MCF 10A (cell line): ENCODE measurements at regions of chr15 and their contacts with region 1.

Region 1: DNA sequence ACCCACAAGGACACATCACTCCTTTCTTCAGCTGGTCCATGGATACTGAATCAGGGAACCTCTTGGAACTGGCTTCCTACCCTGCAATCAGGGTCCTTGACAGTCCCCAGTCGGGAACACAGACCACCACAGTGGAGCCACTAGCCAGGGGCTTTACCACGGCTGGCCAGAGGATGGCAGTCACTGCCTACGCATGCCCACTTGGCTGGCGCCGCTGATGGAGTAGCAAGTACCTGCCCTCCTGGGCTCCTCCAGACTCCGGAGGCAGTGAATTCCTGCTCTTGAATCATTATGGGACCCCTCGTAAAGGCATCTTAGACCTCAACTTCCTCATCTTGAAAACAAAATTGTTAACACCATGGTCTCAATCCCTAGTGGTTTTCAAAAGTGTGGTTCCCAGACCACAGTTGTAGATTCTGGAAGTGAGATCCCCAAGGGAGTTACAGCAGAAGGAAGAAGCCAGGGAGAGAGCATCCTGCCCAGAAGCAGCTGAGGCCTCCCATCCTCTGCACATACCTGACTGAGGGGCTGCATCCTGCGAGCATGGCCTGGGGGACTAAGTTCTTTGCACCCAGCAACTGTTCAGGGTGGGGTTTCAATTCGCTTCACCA is 9.1 kb upstream of the SKIC8 start:
- DNase-seq: peak; percentile 68
- H3K4me3 Mint-ChIP-seq: no peak overlapping the region
- H3K27ac Mint-ChIP-seq: no peak overlapping the region
- H3K4me1 Mint-ChIP-seq: no peaks in the 10 kb centered on the region
- H3K27me3 Mint-ChIP-seq: no peaks in the 10 kb centered on the region
- CTCF ChIP-seq: peak; percentile 90

Region 2: DNA sequence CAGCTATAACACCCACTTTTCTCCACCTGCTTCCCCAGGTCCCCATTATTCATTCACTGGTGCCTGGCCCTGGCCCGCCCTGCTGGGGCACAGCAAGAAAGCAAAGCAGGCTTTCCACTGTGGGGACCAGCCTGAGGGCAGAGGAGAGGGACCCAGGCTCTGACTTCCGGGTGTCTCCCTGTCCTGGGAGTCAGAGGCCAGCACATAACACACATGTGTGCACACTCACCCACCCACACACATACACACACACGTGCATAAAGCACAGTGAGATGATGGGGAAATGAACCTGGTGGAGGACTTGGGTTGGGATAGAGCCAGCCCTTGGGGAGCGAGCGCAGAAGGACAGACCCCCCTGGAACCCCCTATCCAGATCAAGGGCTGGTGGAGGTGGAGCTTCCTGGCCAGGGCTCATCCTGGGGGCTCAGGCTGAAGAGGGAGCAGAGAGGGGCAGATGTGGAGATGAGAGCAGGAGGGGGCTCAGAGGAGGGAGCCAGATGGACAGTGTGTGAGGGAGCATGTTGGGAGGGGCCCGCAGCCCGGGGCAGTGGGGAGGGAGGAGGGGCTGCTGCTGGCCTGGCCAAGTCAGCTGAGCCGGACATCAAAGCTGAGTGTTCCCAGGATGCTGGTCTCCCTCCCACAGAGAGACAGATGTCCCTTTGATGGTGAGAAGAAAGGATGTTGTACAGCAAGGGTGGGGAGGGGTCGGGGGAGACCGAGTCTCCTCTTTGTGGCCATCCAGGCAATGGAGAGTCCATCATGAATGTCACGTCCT is 754.0 kb before region 1 on chr15:
- CTCF ChIA-PET with region 1: no interaction called
- POLR2A ChIA-PET with region 1: no interaction called
- intact Hi-C with region 1: no loop called
- DNase-seq: no peak
- H3K4me3 Mint-ChIP-seq: no peak overlapping the region
- H3K27ac Mint-ChIP-seq: no peak overlapping the region
- H3K4me1 Mint-ChIP-seq: no peaks in the 10 kb centered on the region
- H3K27me3 Mint-ChIP-seq: peaks cover 7% of the 10 kb centered on the region
- CTCF ChIP-seq: no peak

Region 3: GRCh38 chr15:78195735-78196201 is 112.8 kb before region 1 on chr15:
- CTCF ChIA-PET with region 1: no interaction called
- POLR2A ChIA-PET with region 1: no interaction called
- intact Hi-C with region 1: no loop called
- DNase-seq: peak; percentile 50
- H3K4me3 Mint-ChIP-seq: no peak overlapping the region
- H3K27ac Mint-ChIP-seq: no peak overlapping the region
- H3K4me1 Mint-ChIP-seq: no peaks in the 10 kb centered on the region
- H3K27me3 Mint-ChIP-seq: peaks cover 16% of the 10 kb centered on the region
- CTCF ChIP-seq: peak; percentile 66

Region 4: GRCh38 chr15:78374436-78375393 is 66.2 kb after region 1 on chr15:
- CTCF ChIA-PET with region 1: no interaction called
- POLR2A ChIA-PET with region 1: no interaction called
- intact Hi-C with region 1: no loop called
- DNase-seq: peak; percentile 85
- H3K4me3 Mint-ChIP-seq: no peak overlapping the region
- H3K27ac Mint-ChIP-seq: peak overlapping the region; percentile 80
- H3K4me1 Mint-ChIP-seq: peaks cover 13% of the 10 kb centered on the region
- H3K27me3 Mint-ChIP-seq: no peaks in the 10 kb centered on the region
- CTCF ChIP-seq: no peak

Region 5: GRCh38 chr15:78415286-78415685 is 106.8 kb after region 1 on chr15:
- CTCF ChIA-PET with region 1: interaction called, 222 read pairs
- POLR2A ChIA-PET with region 1: interaction called, 3 read pairs
- intact Hi-C with region 1: loop called (anchors 1 kb)
- DNase-seq: peak; percentile 44
- H3K4me3 Mint-ChIP-seq: no peak overlapping the region
- H3K27ac Mint-ChIP-seq: no peak overlapping the region
- H3K4me1 Mint-ChIP-seq: no peaks in the 10 kb centered on the region
- H3K27me3 Mint-ChIP-seq: no peaks in the 10 kb centered on the region
- CTCF ChIP-seq: peak; percentile 40

Region 6: GRCh38 chr15:78422571-78423340 is 114.2 kb after region 1 on chr15:
- CTCF ChIA-PET with region 1: interaction called, 222 read pairs
- POLR2A ChIA-PET with region 1: interaction called, 3 read pairs
- intact Hi-C with region 1: loop called (anchors 1 kb)
- DNase-seq: peak; percentile 61
- H3K4me3 Mint-ChIP-seq: no peak overlapping the region
- H3K27ac Mint-ChIP-seq: no peak overlapping the region
- H3K4me1 Mint-ChIP-seq: no peaks in the 10 kb centered on the region
- H3K27me3 Mint-ChIP-seq: peaks cover 26% of the 10 kb centered on the region
- CTCF ChIP-seq: peak; percentile 73

Region 7: GRCh38 chr15:78429477-78429876 is 121.0 kb after region 1 on chr15:
- CTCF ChIA-PET with region 1: interaction called, 222 read pairs
- POLR2A ChIA-PET with region 1: no interaction called
- intact Hi-C with region 1: no loop called
- DNase-seq: no peak
- H3K4me3 Mint-ChIP-seq: no peak overlapping the region
- H3K27ac Mint-ChIP-seq: no peak overlapping the region
- H3K4me1 Mint-ChIP-seq: no peaks in the 10 kb centered on the region
- H3K27me3 Mint-ChIP-seq: peaks cover 51% of the 10 kb centered on the region
- CTCF ChIP-seq: no peak

Region 8: GRCh38 chr15:78437762-78438302 is 129.3 kb after region 1 on chr15 and contains the start of gene IREB2:
- CTCF ChIA-PET with region 1: interaction called, 9 read pairs
- POLR2A ChIA-PET with region 1: interaction called, 4 read pairs
- intact Hi-C with region 1: loop called (anchors 5 kb)
- DNase-seq: peak; percentile 98
- H3K4me3 Mint-ChIP-seq: peak within 1 kb of the TSS; percentile 78
- H3K27ac Mint-ChIP-seq: peak within 1 kb of the TSS; percentile 75
- H3K4me1 Mint-ChIP-seq: peaks cover 11% of the 10 kb centered on the region
- H3K27me3 Mint-ChIP-seq: peaks cover 9% of the 10 kb centered on the region
- CTCF ChIP-seq: no peak
- total RNA-seq, gene IREB2: 43.4 and 50.1 TPM in 2 replicates

Region 9: GRCh38 chr15:78481917-78482316 is 173.4 kb after region 1 on chr15:
- CTCF ChIA-PET with region 1: interaction called, 3 read pairs
- POLR2A ChIA-PET with region 1: no interaction called
- intact Hi-C with region 1: loop called (anchors 2 kb)
- DNase-seq: no peak
- H3K4me3 Mint-ChIP-seq: no peak overlapping the region
- H3K27ac Mint-ChIP-seq: no peak overlapping the region
- H3K4me1 Mint-ChIP-seq: no peaks in the 10 kb centered on the region
- H3K27me3 Mint-ChIP-seq: no peaks in the 10 kb centered on the region
- CTCF ChIP-seq: no peak

Region 10: DNA sequence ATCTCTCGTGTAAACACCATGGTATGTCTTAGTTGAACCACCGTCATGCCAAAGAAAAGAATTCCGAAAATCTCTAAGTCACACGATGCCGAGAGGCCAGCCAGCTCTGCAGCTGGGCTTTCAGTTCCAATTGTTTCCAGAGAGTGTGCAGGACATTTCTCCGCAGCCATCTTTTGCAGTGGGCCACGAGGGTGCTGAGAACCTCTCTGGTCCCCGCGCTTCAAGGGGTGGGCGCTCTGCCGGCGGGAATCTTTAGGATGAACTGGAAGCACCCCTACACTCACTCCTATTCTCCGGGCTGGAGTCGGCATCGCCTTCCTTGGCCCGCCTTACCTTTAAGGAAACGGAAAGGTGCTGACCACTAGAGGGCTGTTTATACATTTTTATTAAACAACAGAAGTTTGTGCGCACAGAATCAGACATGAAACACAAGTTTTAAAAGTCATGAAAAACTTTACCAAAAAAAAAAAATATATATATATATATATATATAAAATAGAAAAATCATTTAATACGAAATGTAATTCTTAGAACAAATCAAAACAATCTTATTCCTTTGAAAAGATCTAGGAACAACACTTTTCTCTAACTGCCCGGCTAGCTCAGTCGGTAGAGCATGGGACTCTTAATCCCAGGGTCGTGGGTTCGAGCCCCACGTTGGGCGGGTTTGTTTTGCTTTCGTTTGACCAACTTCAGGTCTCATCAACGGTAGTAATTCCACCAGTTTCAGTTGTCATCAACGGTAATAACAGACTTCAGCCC is 551.6 kb after region 1 on chr15:
- CTCF ChIA-PET with region 1: no interaction called
- POLR2A ChIA-PET with region 1: no interaction called
- intact Hi-C with region 1: no loop called
- DNase-seq: peak; percentile 84
- H3K4me3 Mint-ChIP-seq: peak overlapping the region; percentile 77
- H3K27ac Mint-ChIP-seq: peak overlapping the region; percentile 72
- H3K4me1 Mint-ChIP-seq: no peaks in the 10 kb centered on the region
- H3K27me3 Mint-ChIP-seq: no peaks in the 10 kb centered on the region
- CTCF ChIP-seq: peak; percentile 48